Endothelial cell of umbilical vein (primary cell): ENCODE measurements at regions of chr5 and their contacts with region 1.

Region 1: GRCh38 chr5:136769900-136770684 is 404.7 kb upstream of the TRPC7 start:
- DNase-seq: peak; percentile 66
- H3K4me3 ChIP-seq: no peak overlapping the region
- H3K27ac ChIP-seq: no peak overlapping the region
- H3K4me1 ChIP-seq: no peaks in the 10 kb centered on the region
- H3K27me3 ChIP-seq: peaks cover 4 to 7% of the 10 kb centered on the region in 2 experiments
- CTCF ChIP-seq: peak; percentile 86 to 87
- POLR2A ChIP-seq: no peak

Region 2: DNA sequence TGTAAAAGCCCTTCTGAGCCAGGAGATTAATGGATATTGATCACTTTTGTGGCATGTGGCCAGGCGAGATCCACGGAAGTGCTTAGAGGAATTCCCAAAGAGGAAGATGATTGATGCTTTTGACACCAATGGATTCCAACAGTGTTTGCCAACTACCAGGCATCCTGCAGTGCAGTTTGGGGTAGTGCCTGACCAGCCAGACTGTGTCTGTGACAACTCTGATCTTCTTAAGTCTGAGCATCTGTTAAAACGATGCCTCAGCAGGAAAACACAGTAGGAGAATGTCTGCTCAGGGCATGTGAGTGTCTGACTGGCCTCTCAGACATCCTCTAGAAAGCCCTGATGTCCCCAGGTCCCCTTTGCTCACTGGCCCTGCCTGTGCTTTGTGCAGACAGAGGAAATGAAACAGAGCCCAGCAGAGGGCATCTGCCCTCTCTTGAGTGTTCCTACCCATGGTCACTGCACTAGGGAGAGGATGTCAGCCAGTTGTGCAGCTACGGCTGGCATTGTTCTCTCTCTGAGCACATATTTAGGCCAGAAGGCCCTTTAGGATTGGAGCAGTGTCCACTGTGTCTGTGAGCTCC is 461.8 kb before region 1 on chr5:
- CTCF ChIA-PET with region 1: interaction called, 5 read pairs
- POLR2A ChIA-PET with region 1: no interaction called
- dilution Hi-C with region 1: no loop called
- intact Hi-C with region 1: loop called (anchors 1 kb)
- DNase-seq: no peak
- H3K4me3 ChIP-seq: no peak overlapping the region
- H3K27ac ChIP-seq: no peak overlapping the region
- H3K4me1 ChIP-seq: no peaks in the 10 kb centered on the region
- H3K27me3 ChIP-seq: peaks cover 7 to 11% of the 10 kb centered on the region in 2 experiments
- CTCF ChIP-seq: no peak
- POLR2A ChIP-seq: no peak

Region 3: GRCh38 chr5:136364307-136364706 is 405.8 kb before region 1 on chr5:
- CTCF ChIA-PET with region 1: interaction called, 84 read pairs
- POLR2A ChIA-PET with region 1: no interaction called
- dilution Hi-C with region 1: no loop called
- intact Hi-C with region 1: loop called (anchors 1 kb)
- DNase-seq: no peak
- H3K4me3 ChIP-seq: no peak overlapping the region
- H3K27ac ChIP-seq: no peak overlapping the region
- H3K4me1 ChIP-seq: no peaks in the 10 kb centered on the region
- H3K27me3 ChIP-seq: peaks cover 2 to 20% of the 10 kb centered on the region in 2 experiments
- CTCF ChIP-seq: peak in 1 of 2 donors; percentile 15
- POLR2A ChIP-seq: no peak

Region 4: GRCh38 chr5:136424835-136425584 is 345.1 kb before region 1 on chr5:
- CTCF ChIA-PET with region 1: interaction called, 6 read pairs
- POLR2A ChIA-PET with region 1: no interaction called
- dilution Hi-C with region 1: no loop called
- intact Hi-C with region 1: loop called (anchors 1 kb)
- DNase-seq: peak; percentile 58
- H3K4me3 ChIP-seq: no peak overlapping the region
- H3K27ac ChIP-seq: no peak overlapping the region
- H3K4me1 ChIP-seq: no peaks in the 10 kb centered on the region
- H3K27me3 ChIP-seq: peaks cover 5 to 8% of the 10 kb centered on the region in 2 experiments
- CTCF ChIP-seq: peak; percentile 86 to 88
- POLR2A ChIP-seq: no peak

Region 5: DNA sequence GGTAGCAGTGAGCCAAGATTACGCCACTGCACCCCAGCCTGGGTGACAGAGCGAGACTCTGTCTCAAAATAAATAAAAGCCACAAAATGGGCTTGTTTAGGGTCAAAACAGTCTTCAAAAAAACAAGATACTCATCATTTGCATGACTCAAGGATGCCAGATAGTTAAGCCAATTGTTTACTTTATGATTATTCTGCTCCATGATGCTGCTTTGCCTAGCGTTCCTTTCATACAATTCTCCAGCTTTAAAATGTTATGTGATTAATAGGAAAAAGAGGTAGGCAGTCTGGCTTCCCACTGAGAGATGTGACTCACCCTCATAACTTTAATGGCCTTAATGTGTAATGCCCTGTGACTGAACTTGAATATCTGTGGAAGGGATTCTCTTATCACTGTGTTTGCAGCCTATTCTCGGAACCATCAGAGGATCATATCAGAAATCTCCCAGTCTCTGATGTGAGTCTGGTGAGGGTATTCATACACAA is 40.1 kb before region 1 on chr5:
- CTCF ChIA-PET with region 1: interaction called, 12 read pairs
- POLR2A ChIA-PET with region 1: no interaction called
- dilution Hi-C with region 1: no loop called
- intact Hi-C with region 1: no loop called
- DNase-seq: peak; percentile 80
- H3K4me3 ChIP-seq: no peak overlapping the region
- H3K27ac ChIP-seq: peak overlapping the region; percentile 43
- H3K4me1 ChIP-seq: peaks cover 13% of the 10 kb centered on the region
- H3K27me3 ChIP-seq: peaks cover 0 to 2% of the 10 kb centered on the region in 2 experiments
- CTCF ChIP-seq: no peak
- POLR2A ChIP-seq: no peak

Region 6: DNA sequence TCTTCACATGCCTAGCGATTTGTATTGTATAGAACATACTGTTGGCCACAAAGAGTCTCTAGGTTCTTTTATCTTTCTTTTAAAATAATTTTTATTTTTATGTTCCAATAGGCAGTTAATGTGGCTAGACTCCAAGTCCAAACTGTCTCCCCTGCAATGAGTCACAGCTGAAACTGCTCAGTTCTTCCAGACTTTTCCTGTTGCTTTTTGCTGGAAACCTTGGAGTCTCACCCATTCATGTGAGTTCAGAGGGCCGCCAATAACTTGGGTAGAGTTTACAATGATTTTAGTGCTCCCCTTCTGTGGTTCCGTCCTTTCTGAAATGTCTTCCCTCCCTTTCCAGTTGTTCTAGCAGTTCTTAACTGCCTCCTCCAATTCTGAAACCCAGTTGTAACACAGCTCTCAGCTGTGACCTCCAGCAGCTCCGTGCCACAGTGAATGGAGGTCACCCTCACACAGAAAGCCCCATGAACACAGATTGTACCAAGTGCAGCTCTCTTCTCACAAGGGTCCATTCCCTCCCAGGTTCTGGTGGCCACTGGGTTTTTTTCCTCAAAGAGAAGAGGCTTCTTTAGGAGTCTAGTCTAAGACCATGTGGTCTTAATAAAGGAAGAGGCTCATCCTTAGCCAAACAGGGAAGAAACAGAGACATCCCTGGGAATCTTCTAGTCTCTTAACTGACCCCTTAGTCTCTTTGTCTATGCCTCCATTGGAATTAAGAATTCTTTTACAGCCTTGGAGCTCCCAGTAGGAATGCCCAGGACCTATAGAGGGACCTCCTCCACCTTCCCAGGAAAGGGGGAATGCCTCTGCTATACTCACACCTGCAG is 530.5 kb after region 1 on chr5:
- CTCF ChIA-PET with region 1: no interaction called
- POLR2A ChIA-PET with region 1: no interaction called
- dilution Hi-C with region 1: no loop called
- intact Hi-C with region 1: no loop called
- DNase-seq: peak; percentile 94
- H3K4me3 ChIP-seq: peak overlapping the region in 1 of 3 experiments; percentile 21
- H3K27ac ChIP-seq: peak overlapping the region; percentile 89
- H3K4me1 ChIP-seq: peaks cover 49% of the 10 kb centered on the region
- H3K27me3 ChIP-seq: no peaks in the 10 kb centered on the region
- CTCF ChIP-seq: no peak
- POLR2A ChIP-seq: no peak